Activated naive CD4-positive, alpha-beta T cell treated with anti-CD3 and anti-CD28 coated beads for 36 hours (primary cell): ENCODE measurements at regions of chr21 and their contacts with region 1.

Region 1: DNA sequence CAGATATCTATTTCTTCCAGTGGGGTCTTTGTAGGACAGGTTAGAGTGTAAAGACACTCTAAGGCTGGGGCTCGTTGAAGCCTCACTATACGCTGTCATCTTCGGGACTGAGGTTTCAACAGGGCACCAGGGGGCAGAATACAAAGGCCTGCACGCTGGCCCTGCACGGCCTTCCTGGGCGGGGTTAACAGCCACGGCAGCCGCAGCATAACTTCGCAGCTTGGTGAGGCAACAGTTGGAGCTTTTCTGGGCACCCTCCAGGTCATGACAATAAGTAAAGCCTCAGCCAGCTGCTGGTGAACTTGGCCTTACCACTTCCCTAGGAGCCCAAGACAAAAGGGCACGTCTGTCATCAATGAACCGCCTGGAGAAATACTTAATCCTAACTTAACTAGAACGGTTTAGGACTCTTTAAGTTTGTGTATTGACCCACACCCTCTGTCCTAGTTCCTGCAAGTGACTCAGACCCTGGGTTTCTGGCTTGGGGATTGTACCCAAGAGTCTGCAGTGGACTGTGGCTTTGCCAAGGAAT is 2.3 kb upstream of the RUNX1 start:
- DNase-seq: peak; percentile 91
- H3K4me3 Mint-ChIP-seq: peak overlapping the region; percentile 16
- H3K27ac Mint-ChIP-seq: peak overlapping the region; percentile 97
- H3K4me1 Mint-ChIP-seq: peaks cover 59% of the 10 kb centered on the region
- H3K27me3 Mint-ChIP-seq: no peaks in the 10 kb centered on the region

Region 2: GRCh38 chr21:34888569-34889319 is 162.6 kb before region 1 on chr21:
- CTCF ChIA-PET with region 1: interaction called, 39 read pairs
- intact Hi-C with region 1: loop called (anchors 1 kb)
- DNase-seq: peak; percentile 90
- H3K4me3 Mint-ChIP-seq: peak overlapping the region; percentile 91
- H3K27ac Mint-ChIP-seq: peak overlapping the region; percentile 99
- H3K4me1 Mint-ChIP-seq: peaks cover 30% of the 10 kb centered on the region
- H3K27me3 Mint-ChIP-seq: no peaks in the 10 kb centered on the region

Region 3: GRCh38 chr21:35020902-35021301 is 30.5 kb before region 1 on chr21:
- CTCF ChIA-PET with region 1: interaction called, 5 read pairs
- intact Hi-C with region 1: loop called (anchors 1 kb)
- DNase-seq: peak; percentile 52
- H3K4me3 Mint-ChIP-seq: no peak overlapping the region
- H3K27ac Mint-ChIP-seq: peak overlapping the region; percentile 80
- H3K4me1 Mint-ChIP-seq: peaks cover 89% of the 10 kb centered on the region
- H3K27me3 Mint-ChIP-seq: no peaks in the 10 kb centered on the region

Region 4: GRCh38 chr21:35138665-35139381 is 87.5 kb after region 1 on chr21:
- CTCF ChIA-PET with region 1: interaction called, 3 read pairs
- intact Hi-C with region 1: loop called (anchors 1 kb)
- DNase-seq: peak; percentile 87
- H3K4me3 Mint-ChIP-seq: peak overlapping the region; percentile 70
- H3K27ac Mint-ChIP-seq: peak overlapping the region; percentile 95
- H3K4me1 Mint-ChIP-seq: peaks cover 38% of the 10 kb centered on the region
- H3K27me3 Mint-ChIP-seq: no peaks in the 10 kb centered on the region

Region 5: GRCh38 chr21:35195232-35195631 is 143.9 kb after region 1 on chr21:
- CTCF ChIA-PET with region 1: no interaction called
- intact Hi-C with region 1: no loop called
- DNase-seq: no peak
- H3K4me3 Mint-ChIP-seq: no peak overlapping the region
- H3K27ac Mint-ChIP-seq: no peak overlapping the region
- H3K4me1 Mint-ChIP-seq: peaks cover 38% of the 10 kb centered on the region
- H3K27me3 Mint-ChIP-seq: no peaks in the 10 kb centered on the region

Region 6: DNA sequence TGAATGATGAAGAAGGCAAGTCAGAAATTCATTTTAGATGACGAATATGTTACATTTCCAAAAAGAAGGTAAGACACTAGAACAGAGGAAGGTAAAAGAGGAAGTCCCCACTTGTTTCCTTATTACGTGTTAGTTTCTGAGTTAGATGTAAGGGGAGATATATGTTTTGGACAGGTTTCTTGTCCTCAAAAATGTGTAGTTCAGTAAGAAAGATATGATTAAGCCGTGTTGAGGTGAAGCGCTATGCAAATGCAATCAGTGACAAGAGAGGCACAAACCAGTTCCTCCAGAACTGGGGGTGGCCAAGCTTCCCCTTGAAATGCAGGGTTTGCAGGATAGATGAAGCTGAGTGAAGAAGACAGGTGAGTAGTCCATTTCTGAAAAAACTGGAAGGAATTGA is 291.1 kb after region 1 on chr21:
- CTCF ChIA-PET with region 1: interaction called, 3 read pairs
- intact Hi-C with region 1: loop called (anchors 1 kb)
- DNase-seq: peak; percentile 68
- H3K4me3 Mint-ChIP-seq: peak overlapping the region; percentile 39
- H3K27ac Mint-ChIP-seq: peak overlapping the region; percentile 93
- H3K4me1 Mint-ChIP-seq: peaks cover 42% of the 10 kb centered on the region
- H3K27me3 Mint-ChIP-seq: peaks cover 4% of the 10 kb centered on the region

Region 7: GRCh38 chr21:35616090-35616489 is 564.7 kb after region 1 on chr21:
- CTCF ChIA-PET with region 1: interaction called, 3 read pairs
- intact Hi-C with region 1: loop called (anchors 5 kb)
- DNase-seq: no peak
- H3K4me3 Mint-ChIP-seq: no peak overlapping the region
- H3K27ac Mint-ChIP-seq: no peak overlapping the region
- H3K4me1 Mint-ChIP-seq: peaks cover 2% of the 10 kb centered on the region
- H3K27me3 Mint-ChIP-seq: no peaks in the 10 kb centered on the region